Body of pancreas (tissue), 4 donors: ENCODE measurements at regions of chr2 and their contacts with region 1.

Region 1: GRCh38 chr2:86123328-86123925 is 17.4 kb downstream of the PTCD3 start:
- DNase-seq: no peak
- ATAC-seq: no peak
- H3K4me3 ChIP-seq: no peak overlapping the region
- H3K27ac ChIP-seq: no peak overlapping the region
- H3K4me1 ChIP-seq: no peaks in the 10 kb centered on the region
- H3K27me3 ChIP-seq: no peaks in the 10 kb centered on the region
- CTCF ChIP-seq: no peak
- POLR2A ChIP-seq: no peak

Region 2: GRCh38 chr2:85888684-85889626 is 234.5 kb before region 1 on chr2 and contains the start of gene ST3GAL5:
- intact Hi-C with region 1: no loop called
- DNase-seq: peak; percentile 87 to 93 (median 89)
- ATAC-seq: peak; percentile 86
- H3K4me3 ChIP-seq: peak within 1 kb of the TSS; percentile 53 to 57
- H3K27ac ChIP-seq: peak within 1 kb of the TSS; percentile 43 to 81 (median 78)
- H3K4me1 ChIP-seq: peaks cover 26% of the 10 kb centered on the region
- H3K27me3 ChIP-seq: no peaks in the 10 kb centered on the region
- CTCF ChIP-seq: peak; percentile 27 to 83 (median 80)
- POLR2A ChIP-seq: peak; percentile 35 to 84 (median 80)
- total RNA-seq, gene ST3GAL5: 8.6 to 18.8 TPM

Region 3: DNA sequence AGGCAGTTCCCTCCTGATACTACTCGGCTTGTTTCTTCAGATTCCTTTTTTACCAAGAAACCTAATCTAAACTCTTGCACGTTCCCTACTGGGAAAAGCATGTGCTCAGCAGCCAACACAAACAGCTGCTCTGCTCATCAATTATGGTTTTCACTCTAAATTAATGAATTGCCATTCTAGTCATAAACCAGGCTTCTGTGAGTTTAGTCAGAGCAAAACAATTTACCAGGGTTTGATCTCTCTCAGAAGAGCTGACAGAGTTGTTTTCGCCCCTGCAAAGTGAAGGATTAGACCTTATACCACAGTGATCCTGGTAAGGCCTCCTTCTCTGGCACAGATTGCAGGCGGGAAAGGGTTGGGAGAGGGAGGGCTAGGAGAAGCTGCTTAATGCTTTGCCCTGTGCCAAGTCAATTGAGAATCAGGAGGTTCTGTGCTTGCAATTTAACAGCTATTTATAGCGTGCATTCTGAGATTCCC is 156.8 kb after region 1 on chr2:
- intact Hi-C with region 1: no loop called
- DNase-seq: no peak
- ATAC-seq: peak; percentile 34
- H3K4me3 ChIP-seq: no peak overlapping the region
- H3K27ac ChIP-seq: no peak overlapping the region
- H3K4me1 ChIP-seq: peaks cover 10% of the 10 kb centered on the region
- H3K27me3 ChIP-seq: no peaks in the 10 kb centered on the region
- CTCF ChIP-seq: no peak
- POLR2A ChIP-seq: no peak

Region 4: GRCh38 chr2:86417961-86418360 is 294.5 kb after region 1 on chr2:
- intact Hi-C with region 1: no loop called
- DNase-seq: no peak
- ATAC-seq: no peak
- H3K4me3 ChIP-seq: no peak overlapping the region
- H3K27ac ChIP-seq: no peak overlapping the region
- H3K4me1 ChIP-seq: no peaks in the 10 kb centered on the region
- H3K27me3 ChIP-seq: no peaks in the 10 kb centered on the region
- CTCF ChIP-seq: no peak
- POLR2A ChIP-seq: no peak

Region 5: GRCh38 chr2:86480105-86480504 is 356.7 kb after region 1 on chr2:
- intact Hi-C with region 1: loop called (anchors 10 kb)
- DNase-seq: peak in 3 of 4 donors; percentile 16 to 22 (median 17)
- ATAC-seq: no peak
- H3K4me3 ChIP-seq: no peak overlapping the region
- H3K27ac ChIP-seq: peak overlapping the region in 2 of 4 donors; percentile 5 to 26
- H3K4me1 ChIP-seq: peaks cover 22% of the 10 kb centered on the region
- H3K27me3 ChIP-seq: no peaks in the 10 kb centered on the region
- CTCF ChIP-seq: no peak
- POLR2A ChIP-seq: no peak